PC-9 (cell line): ENCODE measurements at regions of chr11 and their contacts with region 1.

Region 1: DNA sequence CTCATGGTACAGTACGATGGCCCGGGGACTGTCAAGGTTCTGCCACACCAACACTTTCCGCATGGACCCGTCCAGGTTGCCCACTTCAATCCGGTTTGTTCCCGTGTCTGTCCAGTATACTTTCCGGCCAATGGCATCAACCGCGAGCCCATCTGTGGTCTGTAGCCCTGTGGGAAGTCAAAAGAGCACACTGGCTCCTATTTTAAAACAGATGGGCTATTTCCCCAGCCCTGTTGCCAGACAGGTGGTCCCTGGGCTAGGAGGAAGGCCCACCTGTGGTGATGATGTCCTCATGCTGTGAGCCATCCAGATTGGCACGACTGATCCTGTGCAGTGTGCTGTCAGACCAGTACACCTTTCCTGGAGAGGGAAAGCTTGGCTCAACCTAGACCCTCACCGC is 30.4 kb upstream of the CKAP5 start:
- DNase-seq: no peak
- H3K4me3 ChIP-seq: no peak overlapping the region
- H3K27ac ChIP-seq: no peak overlapping the region
- H3K4me1 ChIP-seq: no peaks in the 10 kb centered on the region
- H3K27me3 ChIP-seq: no peaks in the 10 kb centered on the region
- CTCF ChIP-seq: no peak

Region 2: GRCh38 chr11:46315033-46315738 is 561.3 kb before region 1 on chr11:
- CTCF ChIA-PET with region 1: interaction called, 16 read pairs
- POLR2A ChIA-PET with region 1: no interaction called
- intact Hi-C with region 1: no loop called
- DNase-seq: peak; percentile 74 to 78
- H3K4me3 ChIP-seq: no peak overlapping the region
- H3K27ac ChIP-seq: no peak overlapping the region
- H3K4me1 ChIP-seq: peaks cover 16% of the 10 kb centered on the region
- H3K27me3 ChIP-seq: no peaks in the 10 kb centered on the region
- CTCF ChIP-seq: peak; percentile 100